ENCODE measurements at regions of chr4 and their contacts with region 1.

Region 1: DNA sequence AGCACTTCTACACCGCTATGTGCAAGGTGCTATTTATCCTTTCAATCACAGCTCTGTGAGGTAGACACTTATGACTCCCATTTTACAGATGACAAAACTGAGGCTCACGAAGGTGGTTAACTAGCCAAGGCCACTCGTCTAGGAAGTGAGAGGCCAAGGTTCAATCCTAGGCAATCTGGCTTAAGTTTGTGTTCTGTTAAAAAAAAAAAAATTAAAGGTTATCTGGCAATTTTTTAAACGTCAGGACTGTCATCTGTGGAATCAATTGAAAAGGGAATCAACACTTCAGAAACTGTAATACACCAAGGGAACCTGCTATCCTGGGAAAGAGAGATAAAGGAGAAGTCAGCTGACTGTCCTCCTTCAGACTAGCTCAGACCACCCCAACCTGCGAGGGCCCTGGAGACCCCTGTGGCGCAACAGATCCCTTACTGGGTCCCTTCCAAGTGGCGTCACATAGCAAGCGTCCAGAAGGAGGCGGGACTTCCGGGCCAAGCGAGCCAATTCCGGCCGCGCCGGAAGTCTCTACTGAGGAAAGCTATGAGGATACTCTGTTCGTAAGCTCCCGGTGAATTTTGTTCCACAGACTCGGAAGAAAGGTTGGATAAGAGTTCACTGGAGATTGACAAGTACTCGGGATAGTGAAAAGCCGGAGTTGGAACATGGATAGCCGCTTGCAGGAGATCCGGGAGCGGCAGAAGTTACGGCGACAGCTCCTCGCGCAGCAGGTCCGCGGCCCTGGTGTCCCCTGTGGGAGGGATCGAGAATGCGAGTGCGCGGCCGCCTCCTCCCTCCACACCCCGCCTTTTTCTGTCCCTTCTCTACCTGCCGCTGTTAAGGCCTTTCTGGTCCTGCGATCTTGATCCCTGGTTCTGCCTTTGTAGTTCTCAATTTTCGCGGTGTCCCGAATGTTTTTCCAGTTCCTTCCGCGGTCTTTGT is at the start of gene METTL14:
- DNase-seq: peak; percentile 83 to 87 (median 83)
- H3K4me3 ChIP-seq: peak within 1 kb of the TSS; percentile 60 to 87
- H3K4me3 Mint-ChIP-seq: peak within 1 kb of the TSS; percentile 94 to 98 (median 97)
- H3K27ac ChIP-seq: peak within 1 kb of the TSS; percentile 80
- H3K27ac Mint-ChIP-seq: peak within 1 kb of the TSS; percentile 85 to 99 (median 98)
- H3K4me1 ChIP-seq: peaks cover 27% of the 10 kb centered on the region
- H3K4me1 Mint-ChIP-seq: peaks cover 20 to 31% (median 25%) of the 10 kb centered on the region in 4 donors
- H3K27me3 ChIP-seq: no peaks in the 10 kb centered on the region
- H3K27me3 Mint-ChIP-seq: no peaks in the 10 kb centered on the region
- total RNA-seq, gene METTL14: 67.2 to 70.5 TPM

Region 2: GRCh38 chr4:118586357-118586790 is 98.8 kb before region 1 on chr4:
- CTCF ChIA-PET with region 1: interaction called, 3 read pairs
- POLR2A ChIA-PET with region 1: interaction called, 4 read pairs
- intact Hi-C with region 1: loop called (anchors 1 kb)
- DNase-seq: no peak
- H3K4me3 ChIP-seq: no peak overlapping the region
- H3K4me3 Mint-ChIP-seq: no peak overlapping the region
- H3K27ac ChIP-seq: no peak overlapping the region
- H3K27ac Mint-ChIP-seq: peak overlapping the region in 1 of 7 donors; percentile 2
- H3K4me1 ChIP-seq: peaks cover 6% of the 10 kb centered on the region
- H3K4me1 Mint-ChIP-seq: peaks cover 5 to 16% (median 10%) of the 10 kb centered on the region in 4 donors
- H3K27me3 ChIP-seq: peaks cover 4% of the 10 kb centered on the region
- H3K27me3 Mint-ChIP-seq: peaks cover 14 to 23% of the 10 kb centered on the region in 2 donors